ENCODE measurements at regions of chr5 and their contacts with region 1.

Region 1: GRCh38 chr5:79133657-79134451 is 22.2 kb downstream of the BHMT start:
- DNase-seq: peak; percentile 81
- H3K4me3 Mint-ChIP-seq: peak overlapping the region; percentile 67
- H3K27ac Mint-ChIP-seq: peak overlapping the region; percentile 74
- H3K4me1 Mint-ChIP-seq: peaks cover 13% of the 10 kb centered on the region
- H3K27me3 Mint-ChIP-seq: peaks cover 3% of the 10 kb centered on the region

Region 2: DNA sequence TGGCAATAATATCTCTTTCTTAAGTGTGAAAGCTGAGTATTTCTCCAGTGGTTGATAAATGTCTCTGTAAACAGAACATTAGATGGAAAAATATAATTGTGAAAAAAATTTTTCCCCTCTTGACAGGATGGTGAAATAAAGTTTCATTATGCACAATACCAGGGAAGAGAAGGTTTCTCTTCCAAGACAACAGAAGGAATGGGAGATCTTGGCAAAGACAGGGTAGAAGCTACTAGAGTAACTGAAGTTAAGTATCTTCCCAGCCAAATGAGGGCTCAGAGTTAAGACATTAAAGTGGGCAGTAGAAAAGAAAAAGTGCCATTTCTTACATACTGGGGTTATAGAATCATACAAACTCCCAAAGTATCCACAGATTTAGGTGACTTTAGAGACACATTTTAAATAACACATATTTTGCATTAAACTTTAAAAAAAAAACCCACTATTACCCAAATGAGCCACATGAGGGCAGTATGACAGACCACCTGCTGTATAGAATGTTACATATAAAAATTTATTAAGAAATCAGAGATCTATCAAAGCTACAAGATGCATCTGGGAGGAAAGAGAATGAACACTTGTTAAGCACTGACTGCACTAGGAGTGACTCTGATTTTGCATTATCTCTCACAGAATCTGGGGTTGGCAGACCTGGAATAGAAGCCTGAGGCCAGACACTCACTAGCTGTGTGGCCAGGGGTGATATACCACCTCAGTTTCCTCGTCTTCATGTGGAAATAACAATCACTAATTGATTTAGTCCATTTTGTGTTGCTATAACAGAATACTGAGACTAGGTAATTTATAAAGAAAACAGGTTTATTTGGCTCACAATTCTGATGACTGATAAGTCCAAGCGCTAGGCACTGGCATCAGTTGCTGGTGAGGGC is 247.3 kb before region 1 on chr5:
- CTCF ChIA-PET with region 1: interaction called, 27 read pairs
- POLR2A ChIA-PET with region 1: no interaction called
- intact Hi-C with region 1: no loop called
- DNase-seq: no peak
- H3K4me3 Mint-ChIP-seq: no peak overlapping the region
- H3K27ac Mint-ChIP-seq: no peak overlapping the region
- H3K4me1 Mint-ChIP-seq: peaks cover 12% of the 10 kb centered on the region
- H3K27me3 Mint-ChIP-seq: no peaks in the 10 kb centered on the region

Region 3: DNA sequence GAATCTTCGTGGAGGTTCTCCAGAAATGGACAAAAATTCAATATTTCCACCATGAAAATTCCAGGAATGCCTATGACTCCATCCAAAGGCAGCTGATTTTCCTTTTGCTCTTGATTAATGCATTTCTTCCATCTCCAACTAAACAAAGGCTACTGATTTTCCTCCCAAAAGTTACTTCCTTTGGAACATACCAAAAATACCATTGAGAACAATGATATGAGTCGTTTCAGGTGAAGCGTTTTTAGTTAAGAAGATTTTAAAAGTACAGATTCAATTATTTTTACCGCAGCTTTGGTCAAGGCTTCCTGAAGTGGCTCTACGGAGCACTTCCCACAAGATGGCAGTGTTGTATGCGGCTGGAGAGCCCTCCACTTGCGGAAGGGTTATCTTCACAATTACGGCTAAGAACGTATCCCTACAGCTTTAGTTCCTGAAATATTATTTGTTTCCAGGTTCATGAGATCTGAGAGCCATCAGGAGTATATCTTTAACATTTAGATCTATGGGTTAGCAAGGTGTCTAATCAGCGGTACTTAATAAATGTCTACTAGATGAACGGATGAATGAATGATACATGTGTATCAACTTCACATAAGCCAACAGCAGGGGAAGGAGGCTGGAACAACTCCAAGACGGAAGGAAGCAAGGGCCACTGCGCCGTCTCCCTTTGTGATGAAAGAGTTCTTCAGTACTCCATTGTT is 112.8 kb before region 1 on chr5:
- CTCF ChIA-PET with region 1: interaction called, 404 read pairs
- POLR2A ChIA-PET with region 1: no interaction called
- intact Hi-C with region 1: loop called (anchors 1 kb)
- DNase-seq: peak; percentile 66
- H3K4me3 Mint-ChIP-seq: no peak overlapping the region
- H3K27ac Mint-ChIP-seq: no peak overlapping the region
- H3K4me1 Mint-ChIP-seq: peaks cover 7% of the 10 kb centered on the region
- H3K27me3 Mint-ChIP-seq: peaks cover 43% of the 10 kb centered on the region

Region 4: GRCh38 chr5:79120216-79120615 is 13.6 kb before region 1 on chr5:
- CTCF ChIA-PET with region 1: interaction called, 24 read pairs
- POLR2A ChIA-PET with region 1: no interaction called
- intact Hi-C with region 1: no loop called
- DNase-seq: peak; percentile 20
- H3K4me3 Mint-ChIP-seq: no peak overlapping the region
- H3K27ac Mint-ChIP-seq: no peak overlapping the region
- H3K4me1 Mint-ChIP-seq: no peaks in the 10 kb centered on the region
- H3K27me3 Mint-ChIP-seq: peaks cover 6% of the 10 kb centered on the region

Region 5: DNA sequence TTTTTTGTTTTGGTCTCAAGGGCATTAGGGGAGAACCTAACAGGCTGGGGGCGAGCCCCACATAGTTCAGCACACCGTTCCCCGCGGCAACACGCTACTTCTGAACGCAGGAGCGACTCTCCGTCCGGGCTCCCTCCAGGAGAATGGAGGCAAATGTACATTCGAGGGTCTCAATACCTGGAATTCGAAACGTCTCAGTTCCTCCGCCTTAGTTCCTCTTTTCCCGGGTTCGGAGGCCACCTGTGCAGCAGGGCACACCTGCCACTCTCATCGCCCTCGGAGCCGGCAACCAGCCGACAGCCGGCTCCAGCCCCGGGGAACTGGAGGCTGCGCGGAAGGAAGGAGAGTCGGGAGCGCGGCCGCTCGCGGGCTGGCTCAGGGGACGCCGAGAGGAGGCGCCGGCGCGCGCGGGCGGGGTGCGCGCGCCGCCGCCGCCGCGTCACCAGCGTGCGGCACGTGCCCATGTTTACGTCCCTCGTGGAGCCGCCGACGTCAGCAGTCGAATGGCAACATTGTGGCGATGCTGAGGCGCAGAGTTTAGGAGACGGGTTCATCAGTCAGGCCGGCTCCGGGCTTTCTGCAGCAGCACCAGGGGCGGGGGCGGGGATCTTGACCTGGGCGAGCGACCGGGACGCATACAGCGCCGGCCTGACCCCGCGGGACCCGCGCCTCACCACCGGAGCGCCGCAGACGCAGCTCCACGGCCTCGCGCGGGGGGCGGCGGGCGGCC is 101.9 kb after region 1 on chr5 and contains the start of gene JMY:
- CTCF ChIA-PET with region 1: interaction called, 9 read pairs
- POLR2A ChIA-PET with region 1: interaction called, 5 read pairs
- intact Hi-C with region 1: loop called (anchors 2 kb)
- DNase-seq: peak; percentile 91
- H3K4me3 Mint-ChIP-seq: peak within 1 kb of the TSS; percentile 94
- H3K27ac Mint-ChIP-seq: peak within 1 kb of the TSS; percentile 98
- H3K4me1 Mint-ChIP-seq: peaks cover 15% of the 10 kb centered on the region
- H3K27me3 Mint-ChIP-seq: no peaks in the 10 kb centered on the region
- total RNA-seq, gene JMY: 8.6 to 9.1 TPM

Region 6: GRCh38 chr5:79436224-79436623 is 302.4 kb after region 1 on chr5:
- CTCF ChIA-PET with region 1: no interaction called
- POLR2A ChIA-PET with region 1: no interaction called
- intact Hi-C with region 1: no loop called
- DNase-seq: no peak
- H3K4me3 Mint-ChIP-seq: no peak overlapping the region
- H3K27ac Mint-ChIP-seq: no peak overlapping the region
- H3K4me1 Mint-ChIP-seq: no peaks in the 10 kb centered on the region
- H3K27me3 Mint-ChIP-seq: peaks cover 1% of the 10 kb centered on the region

Region 7: DNA sequence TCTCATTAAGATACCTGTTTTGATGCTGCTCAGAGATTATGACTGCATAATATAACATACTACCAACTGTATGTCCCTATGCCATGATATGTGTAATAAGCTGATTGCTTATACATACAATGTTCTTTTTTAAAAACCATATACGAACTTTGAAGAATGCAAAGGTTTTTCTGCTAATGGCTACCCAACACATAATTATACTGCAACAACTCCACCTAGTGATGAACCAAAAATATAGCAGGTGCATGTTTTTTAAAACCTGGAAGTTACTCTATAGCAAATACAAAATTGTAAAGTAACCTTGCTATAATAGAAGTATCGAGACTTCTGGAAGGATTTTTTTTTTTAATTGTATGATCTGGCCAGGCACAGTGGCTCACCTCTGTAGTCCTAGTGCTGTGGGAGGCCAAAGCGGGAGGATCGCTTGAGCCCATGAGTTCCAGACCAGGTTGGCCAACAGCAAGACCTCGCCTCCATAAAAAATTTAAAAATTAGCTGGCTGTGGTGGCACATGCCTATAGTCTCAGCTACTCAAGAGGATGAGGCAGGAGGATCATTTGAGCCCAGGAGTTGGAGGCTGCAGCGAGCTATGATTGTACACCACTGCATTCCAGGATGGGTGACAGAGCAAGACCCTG is 331.0 kb after region 1 on chr5:
- CTCF ChIA-PET with region 1: interaction called, 120 read pairs
- POLR2A ChIA-PET with region 1: no interaction called
- intact Hi-C with region 1: loop called (anchors 1 kb)
- DNase-seq: no peak
- H3K4me3 Mint-ChIP-seq: no peak overlapping the region
- H3K27ac Mint-ChIP-seq: no peak overlapping the region
- H3K4me1 Mint-ChIP-seq: no peaks in the 10 kb centered on the region
- H3K27me3 Mint-ChIP-seq: peaks cover 6% of the 10 kb centered on the region

Region 8: DNA sequence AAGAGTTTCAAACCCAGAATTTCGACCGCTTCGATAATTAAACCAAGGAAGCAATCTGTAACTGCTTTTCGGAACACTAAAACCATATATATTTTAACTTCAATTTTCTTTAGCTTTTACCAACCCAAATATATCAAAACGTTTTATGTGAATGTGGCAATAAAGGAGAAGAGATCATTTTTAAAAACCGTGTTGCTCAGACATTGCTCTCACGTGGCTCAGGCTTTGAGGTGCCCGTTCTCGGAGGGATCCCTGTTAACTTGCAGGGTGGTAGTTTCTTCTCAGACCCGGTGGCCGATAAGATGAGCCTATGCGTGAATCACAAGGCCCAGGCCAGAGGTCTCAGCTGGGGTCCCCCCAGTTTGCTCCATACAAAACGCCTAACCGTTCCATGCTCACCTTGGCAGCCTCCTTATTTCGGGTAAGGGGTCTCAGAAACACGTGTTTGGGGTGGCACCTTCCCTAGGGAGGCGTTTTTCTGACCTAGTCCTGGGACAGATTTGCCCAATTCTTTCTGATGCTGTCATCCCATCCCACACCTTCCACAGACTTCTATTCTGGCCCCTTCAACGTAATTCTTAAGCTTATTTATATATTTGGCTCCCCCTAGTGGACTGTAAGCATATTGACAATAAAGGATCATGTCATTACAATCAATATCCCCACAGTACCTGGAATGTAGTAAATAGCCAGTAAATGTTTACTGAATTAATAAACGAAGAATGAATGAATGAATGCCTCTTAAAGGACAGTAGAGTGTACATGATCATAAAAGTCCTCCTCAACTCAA is 949.4 kb after region 1 on chr5:
- CTCF ChIA-PET with region 1: interaction called, 11 read pairs
- POLR2A ChIA-PET with region 1: no interaction called
- intact Hi-C with region 1: no loop called
- DNase-seq: peak; percentile 31
- H3K4me3 Mint-ChIP-seq: peak overlapping the region; percentile 54
- H3K27ac Mint-ChIP-seq: peak overlapping the region; percentile 50
- H3K4me1 Mint-ChIP-seq: peaks cover 11% of the 10 kb centered on the region
- H3K27me3 Mint-ChIP-seq: no peaks in the 10 kb centered on the region